CD14-positive monocyte (primary cell): ENCODE measurements at regions of chr3 and their contacts with region 1.

Region 1: DNA sequence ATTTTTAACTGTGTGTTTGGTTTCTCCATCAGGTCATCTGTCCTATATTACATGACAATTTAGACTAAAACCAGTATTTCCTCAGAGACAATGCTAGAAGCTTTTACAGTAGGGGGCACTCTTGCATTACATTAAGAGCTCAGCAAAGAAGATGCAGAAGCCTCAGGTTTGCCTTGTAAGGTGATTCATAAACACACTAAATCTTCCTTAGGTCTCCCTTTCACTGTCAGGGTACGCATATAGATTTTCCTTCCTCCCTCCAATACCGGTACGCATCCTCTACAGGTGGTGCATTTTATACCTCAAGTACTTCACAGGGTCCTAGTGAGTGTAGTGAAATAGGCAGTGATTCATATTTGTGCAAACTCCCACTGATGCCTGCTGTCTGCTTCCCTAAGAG is 46.5 kb downstream of the CD86 start:
- DNase-seq: peak; percentile 53 to 68 (median 66)
- H3K4me3 ChIP-seq: peak overlapping the region in 1 of 3 experiments; percentile 3
- H3K4me3 Mint-ChIP-seq: peak overlapping the region in 1 of 2 donors; percentile 1
- H3K27ac ChIP-seq: peak overlapping the region in 1 of 2 donors; percentile 58
- H3K27ac Mint-ChIP-seq: peak overlapping the region; percentile 34 to 92 (median 76)
- H3K4me1 ChIP-seq: peaks cover 39 to 42% of the 10 kb centered on the region in 2 donors
- H3K4me1 Mint-ChIP-seq: peaks cover 35% of the 10 kb centered on the region
- H3K27me3 ChIP-seq: no peaks in the 10 kb centered on the region
- H3K27me3 Mint-ChIP-seq: no peaks in the 10 kb centered on the region
- CTCF ChIP-seq: peak; percentile 65

Region 2: GRCh38 chr3:122258757-122259371 is 157.2 kb after region 1 on chr3:
- intact Hi-C with region 1: loop called in 1 of 2 experiments (anchors 10 kb)
- DNase-seq: peak; percentile 70 to 87 (median 79)
- H3K4me3 ChIP-seq: no peak overlapping the region
- H3K4me3 Mint-ChIP-seq: peak overlapping the region in 1 of 2 donors; percentile 30
- H3K27ac ChIP-seq: no peak overlapping the region
- H3K27ac Mint-ChIP-seq: peak overlapping the region in 1 of 7 donors; percentile 40
- H3K4me1 ChIP-seq: peaks cover 59 to 74% of the 10 kb centered on the region in 2 donors
- H3K4me1 Mint-ChIP-seq: peaks cover 49% of the 10 kb centered on the region
- H3K27me3 ChIP-seq: no peaks in the 10 kb centered on the region
- H3K27me3 Mint-ChIP-seq: peaks cover 0 to 5% (median 2%) of the 10 kb centered on the region in 3 donors
- CTCF ChIP-seq: peak; percentile 81